ENCODE measurements at regions of chr16 and their contacts with region 1.

Region 1: DNA sequence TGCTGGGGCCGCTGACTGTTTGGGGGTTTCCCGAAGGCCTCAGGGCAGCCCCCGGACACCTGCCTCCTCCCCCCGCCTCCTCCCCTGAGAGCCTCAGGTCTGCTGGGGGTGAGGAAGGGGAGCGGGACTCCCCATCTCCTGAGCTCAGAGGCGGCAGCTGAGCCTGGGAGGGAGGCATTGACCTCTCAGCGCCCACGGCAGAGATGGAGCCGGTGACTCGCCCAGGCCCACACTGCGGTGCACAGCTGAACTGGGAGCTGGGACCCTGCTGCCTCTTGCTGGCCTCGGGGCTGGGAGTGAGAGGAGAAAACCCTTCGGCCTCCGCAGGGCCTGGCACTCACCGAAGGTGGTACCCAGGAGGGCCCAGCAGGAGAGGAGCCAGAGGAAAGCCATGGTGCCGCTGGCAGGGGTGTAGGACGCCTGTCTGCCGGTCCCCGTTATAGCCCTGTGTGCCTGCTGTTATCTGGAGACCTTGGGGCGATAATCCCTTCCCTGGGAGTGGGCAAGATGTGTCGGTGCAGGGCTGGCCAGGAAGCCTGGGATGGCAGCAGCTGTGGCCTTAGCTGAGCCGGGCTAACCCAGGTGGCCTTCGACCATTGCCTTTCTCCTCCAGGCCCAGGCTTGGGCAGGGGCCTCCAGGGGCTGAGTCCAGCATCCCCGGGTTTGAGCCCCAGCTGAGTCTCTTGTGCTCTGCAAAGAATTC is at the start of gene CTRB2:
- DNase-seq: no peak
- H3K4me3 ChIP-seq: no peak within 1 kb of the TSS
- H3K4me3 Mint-ChIP-seq: peak within 1 kb of the TSS in 1 of 2 donors; percentile 26
- H3K27ac ChIP-seq: no peak within 1 kb of the TSS
- H3K27ac Mint-ChIP-seq: no peak within 1 kb of the TSS
- H3K4me1 ChIP-seq: no peaks in the 10 kb centered on the region
- H3K4me1 Mint-ChIP-seq: no peaks in the 10 kb centered on the region
- H3K27me3 ChIP-seq: peaks cover 0 to 15% of the 10 kb centered on the region in 2 donors
- H3K27me3 Mint-ChIP-seq: peaks cover 36 to 65% (median 44%) of the 10 kb centered on the region in 3 donors
- CTCF ChIP-seq: no peak
- polyA plus RNA-seq, gene CTRB2: not detected

Region 2: DNA sequence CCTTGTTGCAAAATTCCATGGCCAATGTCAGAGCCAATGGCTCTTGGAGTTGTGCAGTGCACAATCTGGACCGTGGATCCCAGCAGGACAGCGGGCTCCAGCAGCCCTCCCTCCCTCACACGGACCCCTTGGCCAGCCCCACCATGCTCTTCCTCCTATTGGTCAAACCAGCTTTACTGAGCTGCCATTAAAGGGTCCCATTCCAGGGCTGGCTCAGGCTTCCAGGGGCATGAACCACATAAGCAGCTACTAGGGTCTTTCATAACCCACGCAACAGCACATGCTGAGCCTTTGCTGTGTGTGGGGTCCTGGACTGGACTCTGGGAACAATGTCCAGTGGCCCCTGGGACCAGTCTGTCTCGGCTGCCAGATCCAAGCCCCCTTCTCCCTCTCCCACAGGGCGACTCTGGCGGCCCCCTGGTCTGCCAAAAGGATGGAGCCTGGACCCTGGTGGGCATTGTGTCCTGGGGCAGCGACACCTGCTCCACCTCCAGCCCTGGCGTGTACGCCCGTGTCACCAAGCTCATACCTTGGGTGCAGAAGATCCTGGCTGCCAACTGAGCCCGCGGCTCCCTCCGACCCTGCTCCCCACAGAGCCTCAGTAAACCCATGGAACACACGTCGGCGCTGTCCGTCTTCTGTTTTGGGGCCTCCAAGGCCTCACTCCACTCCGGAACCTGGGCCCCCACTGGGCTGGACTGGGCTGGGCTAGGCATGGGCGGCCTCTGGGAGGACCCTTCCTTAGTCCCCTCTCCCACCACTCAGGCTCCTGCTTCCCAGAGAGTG is 17.6 kb after region 1 on chr16:
- intact Hi-C with region 1: loop called in 1 of 2 experiments (anchors 2 kb)
- DNase-seq: no peak
- H3K4me3 ChIP-seq: no peak overlapping the region
- H3K4me3 Mint-ChIP-seq: no peak overlapping the region
- H3K27ac ChIP-seq: no peak overlapping the region
- H3K27ac Mint-ChIP-seq: peak overlapping the region in 1 of 7 donors; percentile 57
- H3K4me1 ChIP-seq: no peaks in the 10 kb centered on the region
- H3K4me1 Mint-ChIP-seq: peaks cover 8% of the 10 kb centered on the region
- H3K27me3 ChIP-seq: peaks cover 0 to 30% of the 10 kb centered on the region in 2 donors
- H3K27me3 Mint-ChIP-seq: peaks cover 25 to 71% (median 52%) of the 10 kb centered on the region in 3 donors
- CTCF ChIP-seq: no peak

Region 3: DNA sequence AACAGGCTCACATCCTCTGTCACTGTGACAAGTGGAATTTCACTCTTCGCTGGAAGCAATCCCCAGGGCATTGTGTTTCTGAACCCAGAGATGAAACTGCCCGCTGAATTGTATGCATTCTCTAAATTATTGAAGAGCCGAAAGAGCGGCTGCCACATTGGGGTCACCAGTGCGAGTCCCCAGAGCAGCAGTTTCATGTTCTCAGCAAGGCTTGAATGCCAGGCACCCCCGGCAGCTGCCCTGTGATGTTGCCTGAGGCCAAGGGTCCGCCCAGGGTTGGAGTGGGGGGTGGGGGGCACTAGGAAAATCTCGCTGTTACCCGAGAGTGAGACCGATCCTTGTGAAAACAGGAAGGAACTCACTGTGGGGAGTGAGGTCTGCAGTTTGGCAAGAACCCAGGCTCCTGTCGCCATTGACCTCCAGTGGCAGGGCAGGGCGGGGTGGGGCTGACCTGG is 65.2 kb after region 1 on chr16:
- intact Hi-C with region 1: no loop called
- DNase-seq: peak in 1 of 3 donors; percentile 12
- H3K4me3 ChIP-seq: no peak overlapping the region
- H3K4me3 Mint-ChIP-seq: peak overlapping the region in 1 of 2 donors; percentile 63
- H3K27ac ChIP-seq: no peak overlapping the region
- H3K27ac Mint-ChIP-seq: no peak overlapping the region
- H3K4me1 ChIP-seq: peaks cover 5 to 6% of the 10 kb centered on the region in 2 donors
- H3K4me1 Mint-ChIP-seq: peaks cover 8% of the 10 kb centered on the region
- H3K27me3 ChIP-seq: peaks cover 12 to 70% of the 10 kb centered on the region in 2 donors
- H3K27me3 Mint-ChIP-seq: peaks cover 80 to 96% (median 83%) of the 10 kb centered on the region in 3 donors
- CTCF ChIP-seq: no peak

Measured in CD14-positive monocyte (primary cell).